ENCODE measurements at regions of chr1 and their contacts with region 1.

Region 1: DNA sequence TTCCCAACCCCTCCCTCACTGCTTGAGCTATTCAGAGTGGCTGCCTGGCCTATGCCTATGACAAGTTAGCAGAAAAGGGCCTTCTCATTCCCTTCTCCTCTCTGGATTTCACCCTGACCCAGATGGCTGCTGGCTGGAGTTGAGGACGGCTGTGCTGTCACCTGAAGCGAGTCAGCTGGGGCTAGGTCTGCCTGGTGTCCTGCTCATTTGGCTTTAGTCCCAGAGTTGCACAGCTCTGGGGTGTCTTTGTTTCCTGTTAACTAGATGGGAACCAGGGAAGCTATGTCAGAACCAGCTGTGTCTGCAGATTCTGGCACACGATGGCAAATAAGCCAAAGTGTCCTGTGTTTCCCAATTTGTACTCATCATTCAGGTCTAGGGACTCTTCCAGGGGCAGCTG is 52.9 kb downstream of the CNIH3 start:
- DNase-seq: peak; percentile 56 to 65
- ATAC-seq: peak; percentile 83 to 90
- H3K4me3 ChIP-seq: no peak overlapping the region
- H3K27ac ChIP-seq: peak overlapping the region; percentile 32 to 71 (median 60)
- H3K4me1 ChIP-seq: peaks cover 5 to 19% of the 10 kb centered on the region in 2 donors
- H3K27me3 ChIP-seq: no peaks in the 10 kb centered on the region
- CTCF ChIP-seq: no peak
- POLR2A ChIP-seq: no peak

Region 2: DNA sequence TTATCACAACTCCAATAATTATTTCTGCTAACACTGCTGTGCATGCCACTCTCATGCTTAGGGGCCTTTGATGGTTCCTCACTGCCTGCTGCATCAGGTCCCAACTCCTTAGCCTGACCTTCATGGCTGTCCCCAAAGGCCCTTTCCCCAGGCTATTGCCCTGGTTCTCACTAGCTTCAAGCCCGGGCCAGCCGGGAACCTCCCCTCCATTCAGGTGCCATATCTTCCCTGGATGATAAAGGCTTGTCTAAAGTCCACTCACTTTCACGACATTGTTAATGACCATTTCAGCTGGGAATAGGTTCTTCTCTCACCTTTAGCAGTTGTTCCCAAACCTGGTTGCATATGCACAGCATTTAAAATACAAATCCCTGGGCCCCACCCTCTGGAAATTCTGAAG is 42.9 kb after region 1 on chr1:
- in situ Hi-C with region 1: no loop called
- intact Hi-C with region 1: loop called (anchors 1 kb)
- DNase-seq: no peak
- ATAC-seq: no peak
- H3K4me3 ChIP-seq: no peak overlapping the region
- H3K27ac ChIP-seq: no peak overlapping the region
- H3K4me1 ChIP-seq: no peaks in the 10 kb centered on the region
- H3K27me3 ChIP-seq: no peaks in the 10 kb centered on the region
- CTCF ChIP-seq: no peak
- POLR2A ChIP-seq: no peak

Measured in gastrocnemius medialis (tissue), 4 donors.